ENCODE measurements at regions of chr1 and their contacts with region 1.

Region 1: DNA sequence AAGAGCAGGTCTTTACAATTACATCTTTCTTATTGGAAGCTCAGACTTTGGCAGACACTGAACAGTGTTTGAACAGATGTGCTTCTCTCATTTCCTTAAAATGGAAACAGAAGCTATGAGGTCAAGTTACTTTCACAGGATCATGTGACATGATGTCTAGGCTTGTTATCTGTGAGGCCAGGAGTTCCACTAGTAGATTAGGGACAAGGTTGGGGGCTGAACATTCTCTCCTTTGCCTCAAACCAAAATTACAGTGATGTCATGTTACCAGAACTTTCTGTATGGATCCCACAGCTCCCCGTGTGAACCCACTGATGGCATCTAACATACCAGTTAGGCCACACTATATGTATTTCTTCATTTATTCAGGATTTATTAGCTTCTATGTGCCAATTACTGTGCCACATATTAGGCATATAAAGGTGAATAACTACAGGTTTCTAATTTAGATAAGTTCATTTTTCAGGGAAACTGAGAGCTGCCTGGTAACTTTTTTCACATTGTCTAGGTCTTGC is 6.0 kb downstream of the DYNLT5 start:
- DNase-seq: peak; percentile 35 to 91 (median 68)
- ATAC-seq: peak; percentile 95
- H3K4me3 ChIP-seq: no peak overlapping the region
- H3K27ac ChIP-seq: peak overlapping the region; percentile 77
- H3K4me1 ChIP-seq: peaks cover 7 to 29% of the 10 kb centered on the region in 2 experiments; a peak in 4 of 5 replicates
- H3K27me3 ChIP-seq: no peaks in the 10 kb centered on the region
- CTCF ChIP-seq: no peak
- EP300 ChIP-seq: peak; percentile 92
- POLR2A ChIP-seq: no peak; the same call in 1 of the 2 replicates
- RAD21 ChIP-seq: no peak

Region 2: DNA sequence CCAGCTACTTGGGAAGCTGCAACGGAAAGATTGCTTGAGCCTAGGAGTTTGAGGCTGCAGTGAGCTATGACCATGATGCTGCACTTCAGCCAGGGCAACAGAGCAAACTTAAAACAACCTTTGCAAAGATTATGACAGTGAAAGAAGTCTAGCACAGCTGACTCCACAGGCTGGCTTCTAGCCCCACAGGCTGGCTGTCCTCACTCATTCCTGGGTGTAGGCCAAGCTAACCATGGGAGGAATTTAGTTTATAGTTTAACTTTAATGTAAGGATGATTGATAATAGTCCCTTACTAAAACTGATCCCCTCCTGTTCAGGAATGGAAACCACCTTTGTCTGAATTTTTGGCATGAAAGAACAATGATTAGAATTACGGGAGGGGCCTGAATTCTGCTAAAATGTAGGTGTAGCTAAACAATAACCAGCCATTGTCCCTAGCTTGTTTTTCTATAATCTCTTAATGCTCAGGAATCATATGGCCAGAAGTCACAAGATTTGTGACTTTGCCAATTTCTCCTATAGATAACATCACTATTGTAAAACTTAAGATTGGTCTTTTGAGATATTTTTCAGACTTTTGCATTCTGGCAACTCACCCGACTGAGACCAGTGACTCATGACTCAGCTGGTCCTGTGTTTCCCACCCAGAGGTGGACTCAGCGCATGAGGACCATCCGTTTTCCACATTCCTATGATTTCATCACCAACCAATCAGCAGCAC is 252.5 kb before region 1 on chr1:
- CTCF ChIA-PET with region 1: no interaction called
- POLR2A ChIA-PET with region 1: no interaction called
- in situ Hi-C with region 1: no loop called
- intact Hi-C with region 1: no loop called
- DNase-seq: no peak
- ATAC-seq: no peak
- H3K4me3 ChIP-seq: no peak overlapping the region
- H3K27ac ChIP-seq: no peak overlapping the region
- H3K4me1 ChIP-seq: no peaks in the 10 kb centered on the region
- H3K27me3 ChIP-seq: peaks cover 4 to 10% of the 10 kb centered on the region in 2 experiments; a peak in 1 of 5 replicates
- CTCF ChIP-seq: no peak
- EP300 ChIP-seq: no peak
- POLR2A ChIP-seq: no peak
- RAD21 ChIP-seq: no peak

Region 3: GRCh38 chr1:66598670-66599069 is 159.6 kb before region 1 on chr1:
- CTCF ChIA-PET with region 1: no interaction called
- POLR2A ChIA-PET with region 1: no interaction called
- in situ Hi-C with region 1: no loop called
- intact Hi-C with region 1: no loop called
- DNase-seq: no peak
- ATAC-seq: no peak
- H3K4me3 ChIP-seq: no peak overlapping the region
- H3K27ac ChIP-seq: no peak overlapping the region
- H3K4me1 ChIP-seq: no peaks in the 10 kb centered on the region
- H3K27me3 ChIP-seq: peaks cover 0 to 10% of the 10 kb centered on the region in 2 experiments; a peak in 3 of 5 replicates
- CTCF ChIP-seq: no peak
- EP300 ChIP-seq: no peak
- POLR2A ChIP-seq: no peak
- RAD21 ChIP-seq: no peak

Region 4: DNA sequence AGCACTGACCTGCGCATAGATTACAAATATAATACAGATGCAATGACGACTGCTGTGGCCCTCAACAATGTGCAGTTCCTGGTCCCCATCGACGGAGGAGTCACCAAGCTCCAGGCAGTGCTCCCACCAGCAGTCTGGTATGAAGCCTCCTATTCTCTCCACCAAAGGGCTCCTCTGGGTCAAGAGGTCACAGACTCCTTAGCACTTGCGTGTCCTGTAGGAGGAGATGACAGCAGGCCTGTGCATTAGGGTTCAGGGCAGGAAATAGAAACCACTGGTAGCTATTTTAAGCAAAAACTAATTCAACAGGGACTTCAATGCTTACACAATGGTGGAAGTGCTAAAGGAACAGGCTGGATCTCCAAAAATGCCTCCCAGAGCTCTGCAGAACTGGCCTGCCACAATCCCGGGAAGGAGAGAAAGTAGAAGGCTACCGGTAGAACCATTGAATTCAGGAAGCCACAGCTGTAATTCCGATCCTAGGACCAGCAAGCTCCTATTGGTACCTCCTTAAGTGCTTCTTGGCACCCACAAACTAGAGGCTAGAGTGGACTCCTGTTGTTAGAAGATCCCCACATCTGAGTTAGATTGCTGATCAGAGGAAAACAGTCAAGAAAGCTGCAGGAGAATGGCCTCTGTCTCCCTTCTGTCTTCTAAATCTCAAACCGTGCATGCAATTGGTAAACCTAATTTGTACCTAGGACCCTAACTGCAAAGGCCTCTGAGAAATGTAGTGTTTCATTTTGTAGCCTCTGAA is 18.7 kb before region 1 on chr1:
- CTCF ChIA-PET with region 1: no interaction called
- POLR2A ChIA-PET with region 1: interaction called, 13 read pairs
- in situ Hi-C with region 1: no loop called
- intact Hi-C with region 1: no loop called
- DNase-seq: peak in 1 of 4 experiments; percentile 54
- ATAC-seq: peak; percentile 87
- H3K4me3 ChIP-seq: no peak overlapping the region
- H3K27ac ChIP-seq: no peak overlapping the region
- H3K4me1 ChIP-seq: peaks cover 0 to 8% of the 10 kb centered on the region in 2 experiments; a peak in 1 of 5 replicates
- H3K27me3 ChIP-seq: no peaks in the 10 kb centered on the region
- CTCF ChIP-seq: no peak
- EP300 ChIP-seq: no peak
- POLR2A ChIP-seq: no peak
- RAD21 ChIP-seq: no peak